Natural killer cell (primary cell): ENCODE measurements at regions of chrX and their contacts with region 1.

Region 1: GRCh38 chrX:153667956-153668396 is 5.6 kb downstream of the PNCK start:
- DNase-seq: peak; percentile 65 to 84
- ATAC-seq: peak; percentile 81 to 96 (median 86)
- H3K4me3 ChIP-seq: no peak overlapping the region
- H3K4me3 Mint-ChIP-seq: peak overlapping the region; percentile 49
- H3K27ac ChIP-seq: no peak overlapping the region
- H3K27ac Mint-ChIP-seq: peak overlapping the region in 1 of 2 donors; percentile 29
- H3K4me1 ChIP-seq: peaks cover 7% of the 10 kb centered on the region
- H3K4me1 Mint-ChIP-seq: peaks cover 7 to 12% of the 10 kb centered on the region in 2 donors
- H3K27me3 ChIP-seq: no peaks in the 10 kb centered on the region
- H3K27me3 Mint-ChIP-seq: peaks cover 11 to 15% of the 10 kb centered on the region in 2 donors
- CTCF ChIP-seq: peak; percentile 50

Region 2: DNA sequence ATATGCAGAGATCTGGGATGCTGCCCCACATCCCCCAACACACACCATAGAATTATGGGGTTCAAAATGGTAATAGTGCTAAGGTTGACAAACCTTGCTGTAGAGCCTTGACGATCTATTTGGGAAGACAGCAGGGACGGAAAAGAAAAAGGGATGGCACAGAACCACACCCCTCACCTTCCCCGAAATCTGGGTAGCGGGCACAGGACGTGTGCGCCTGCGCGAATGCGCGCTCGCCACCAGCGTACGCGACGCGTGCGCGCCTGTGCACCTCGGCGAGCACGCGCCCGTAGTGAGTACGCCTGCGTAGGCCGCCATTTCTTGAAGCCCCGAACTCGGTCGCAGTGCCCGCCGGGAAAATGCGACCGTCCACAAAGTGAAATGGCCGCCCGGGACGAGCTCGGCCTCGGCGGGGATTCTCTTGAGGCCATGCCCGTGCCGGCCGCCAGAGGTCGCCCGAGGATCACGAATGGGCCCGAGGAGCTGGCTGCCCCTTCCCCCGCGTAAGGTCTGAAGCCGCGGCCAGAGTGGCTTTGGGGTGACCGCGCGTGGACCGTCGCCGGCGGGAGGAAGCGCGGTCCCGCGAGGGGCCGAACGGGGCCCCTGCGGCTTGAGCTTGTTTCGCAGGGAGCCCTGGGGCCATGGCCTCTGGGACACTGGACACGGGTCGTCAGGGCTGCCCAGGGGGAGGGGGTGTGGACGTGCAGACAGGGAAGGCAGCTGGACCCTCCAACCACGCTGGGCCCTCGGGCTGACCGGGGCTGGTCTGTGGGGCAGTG is 726.5 kb before region 1 on chrX:
- intact Hi-C with region 1: loop called (anchors 5 kb)
- DNase-seq: peak; percentile 86 to 95
- ATAC-seq: peak; percentile 97 to 98 (median 98)
- H3K4me3 ChIP-seq: peak overlapping the region; percentile 49
- H3K4me3 Mint-ChIP-seq: peak overlapping the region; percentile 80
- H3K27ac ChIP-seq: peak overlapping the region; percentile 82
- H3K27ac Mint-ChIP-seq: peak overlapping the region; percentile 83 to 90
- H3K4me1 ChIP-seq: peaks cover 11% of the 10 kb centered on the region
- H3K4me1 Mint-ChIP-seq: peaks cover 5 to 8% of the 10 kb centered on the region in 2 donors
- H3K27me3 ChIP-seq: no peaks in the 10 kb centered on the region
- H3K27me3 Mint-ChIP-seq: peaks cover 0 to 6% of the 10 kb centered on the region in 2 donors
- CTCF ChIP-seq: peak; percentile 73

Region 3: GRCh38 chrX:152958524-152959465 is 709.2 kb before region 1 on chrX:
- intact Hi-C with region 1: loop called (anchors 2 kb)
- DNase-seq: peak; percentile 86 to 94
- ATAC-seq: peak; percentile 97
- H3K4me3 ChIP-seq: peak overlapping the region; percentile 28
- H3K4me3 Mint-ChIP-seq: peak overlapping the region; percentile 89
- H3K27ac ChIP-seq: peak overlapping the region; percentile 80
- H3K27ac Mint-ChIP-seq: peak overlapping the region; percentile 87
- H3K4me1 ChIP-seq: peaks cover 11% of the 10 kb centered on the region
- H3K4me1 Mint-ChIP-seq: peaks cover 6 to 7% of the 10 kb centered on the region in 2 donors
- H3K27me3 ChIP-seq: no peaks in the 10 kb centered on the region
- H3K27me3 Mint-ChIP-seq: no peaks in the 10 kb centered on the region
- CTCF ChIP-seq: peak; percentile 66

Region 4: DNA sequence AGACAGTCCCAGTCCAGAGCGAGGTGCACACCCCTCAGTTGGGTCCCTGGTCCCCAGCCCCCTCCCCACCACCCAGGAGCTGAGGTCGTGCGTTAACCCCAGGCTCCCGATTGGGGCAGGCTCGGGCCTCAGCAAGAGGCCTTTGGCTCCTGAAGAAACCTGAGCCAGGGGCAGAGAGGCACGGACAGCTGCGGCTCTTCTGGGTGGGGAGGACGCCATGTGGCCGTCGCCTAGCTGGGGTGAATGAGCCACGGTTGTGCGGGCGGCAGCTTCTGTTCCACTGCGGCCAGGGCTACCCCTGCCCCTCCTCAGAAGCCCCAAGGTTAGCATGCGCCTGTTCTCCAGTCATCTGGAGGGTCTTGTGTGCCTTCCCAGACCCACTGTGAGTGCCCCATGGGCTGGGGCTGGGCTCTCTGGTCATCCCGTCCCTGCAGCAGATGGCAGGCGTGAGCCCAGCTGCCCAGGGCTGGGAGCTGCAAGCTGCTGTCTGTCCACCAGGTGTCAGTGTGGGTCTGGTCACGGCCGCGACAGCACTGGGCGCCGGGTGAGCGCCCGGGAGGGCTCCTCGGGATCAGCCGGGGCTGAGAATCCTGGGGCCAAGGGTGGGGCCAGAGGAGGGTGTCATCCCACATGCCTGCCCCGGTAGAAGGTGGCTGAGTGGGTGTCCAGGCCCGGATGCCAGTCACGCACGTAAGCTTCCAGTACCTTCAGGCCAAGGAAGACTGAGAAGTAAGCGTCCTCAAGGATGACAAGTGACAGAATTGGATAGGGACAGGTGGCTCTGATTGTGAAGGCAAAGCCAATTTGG is 128.6 kb before region 1 on chrX:
- intact Hi-C with region 1: loop called (anchors 5 kb)
- DNase-seq: peak; percentile 41 to 73
- ATAC-seq: peak; percentile 81 to 90 (median 89)
- H3K4me3 ChIP-seq: no peak overlapping the region
- H3K4me3 Mint-ChIP-seq: no peak overlapping the region
- H3K27ac ChIP-seq: no peak overlapping the region
- H3K27ac Mint-ChIP-seq: no peak overlapping the region
- H3K4me1 ChIP-seq: peaks cover 4% of the 10 kb centered on the region
- H3K4me1 Mint-ChIP-seq: no peaks in the 10 kb centered on the region
- H3K27me3 ChIP-seq: no peaks in the 10 kb centered on the region
- H3K27me3 Mint-ChIP-seq: peaks cover 0 to 2% of the 10 kb centered on the region in 2 donors
- CTCF ChIP-seq: peak; percentile 68

Region 5: DNA sequence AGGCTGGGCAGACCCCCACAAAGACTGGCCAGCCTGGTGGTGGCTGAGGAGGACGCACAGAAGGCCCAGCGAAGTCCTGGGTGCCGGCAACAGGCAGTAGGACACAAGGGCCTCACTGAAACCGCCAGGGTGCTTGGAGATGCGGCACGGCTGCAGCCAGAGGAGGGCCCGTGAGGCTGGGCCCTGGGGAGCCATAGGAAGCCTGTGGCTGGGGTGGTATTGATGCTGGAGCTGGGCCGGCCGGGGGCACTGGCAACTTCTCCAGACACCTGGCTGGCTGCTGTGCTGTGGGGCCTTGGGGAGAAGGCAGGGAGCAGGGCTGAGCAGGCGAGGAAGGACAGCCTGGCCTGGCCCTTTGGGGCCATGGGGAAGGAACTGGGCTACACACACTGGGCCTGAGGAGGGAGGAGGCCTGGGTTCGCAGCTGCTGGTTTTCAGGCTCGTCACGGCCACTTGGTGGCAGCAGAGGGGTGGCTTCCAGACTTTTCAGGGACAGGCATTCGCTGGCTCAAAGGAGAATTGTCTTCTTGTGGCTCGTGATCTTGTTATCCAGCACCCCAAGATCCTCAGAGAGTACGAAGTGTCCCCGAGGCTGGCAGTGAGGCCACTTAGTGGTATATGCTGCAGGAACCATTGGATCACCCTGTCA is 113.3 kb before region 1 on chrX:
- intact Hi-C with region 1: loop called (anchors 2 kb)
- DNase-seq: peak; percentile 41 to 76
- ATAC-seq: peak in 2 of 3 donors; percentile 54 to 68
- H3K4me3 ChIP-seq: no peak overlapping the region
- H3K4me3 Mint-ChIP-seq: no peak overlapping the region
- H3K27ac ChIP-seq: no peak overlapping the region
- H3K27ac Mint-ChIP-seq: no peak overlapping the region
- H3K4me1 ChIP-seq: no peaks in the 10 kb centered on the region
- H3K4me1 Mint-ChIP-seq: no peaks in the 10 kb centered on the region
- H3K27me3 ChIP-seq: no peaks in the 10 kb centered on the region
- H3K27me3 Mint-ChIP-seq: peaks cover 0 to 4% of the 10 kb centered on the region in 2 donors
- CTCF ChIP-seq: peak; percentile 25

Region 6: DNA sequence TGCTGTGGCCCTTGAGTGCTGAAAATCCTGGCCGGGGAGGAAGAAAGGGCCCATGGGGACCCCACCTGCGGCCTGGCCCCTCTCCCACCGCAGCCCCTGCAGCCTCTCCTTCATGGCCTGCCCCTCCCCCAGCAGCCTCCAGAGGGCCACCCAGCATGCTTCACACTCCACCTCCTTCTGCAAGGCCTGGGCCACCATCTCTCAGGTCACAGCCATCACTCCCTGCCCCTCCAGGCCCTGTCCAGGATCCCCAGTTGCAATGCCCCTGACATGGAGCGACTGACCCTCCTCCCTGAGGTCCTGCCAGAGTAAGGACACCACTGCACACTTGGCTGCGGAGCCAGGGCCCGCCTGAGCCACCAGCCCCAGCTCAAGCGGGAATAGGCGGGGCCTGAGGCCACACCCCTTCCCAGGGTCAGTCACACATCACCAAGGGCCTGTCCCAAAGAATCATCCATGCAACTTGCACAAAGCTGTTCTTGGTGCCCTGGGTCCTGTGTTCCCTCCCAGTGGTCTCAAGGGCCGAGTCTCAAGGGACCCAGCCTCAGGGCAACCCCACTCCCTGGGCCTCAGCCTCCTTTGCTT is 101.9 kb before region 1 on chrX:
- intact Hi-C with region 1: no loop called
- DNase-seq: no peak
- ATAC-seq: no peak
- H3K4me3 ChIP-seq: no peak overlapping the region
- H3K4me3 Mint-ChIP-seq: no peak overlapping the region
- H3K27ac ChIP-seq: no peak overlapping the region
- H3K27ac Mint-ChIP-seq: no peak overlapping the region
- H3K4me1 ChIP-seq: no peaks in the 10 kb centered on the region
- H3K4me1 Mint-ChIP-seq: no peaks in the 10 kb centered on the region
- H3K27me3 ChIP-seq: no peaks in the 10 kb centered on the region
- H3K27me3 Mint-ChIP-seq: no peaks in the 10 kb centered on the region
- CTCF ChIP-seq: no peak